ENCODE measurements at regions of chr2 and their contacts with region 1.

Region 1: DNA sequence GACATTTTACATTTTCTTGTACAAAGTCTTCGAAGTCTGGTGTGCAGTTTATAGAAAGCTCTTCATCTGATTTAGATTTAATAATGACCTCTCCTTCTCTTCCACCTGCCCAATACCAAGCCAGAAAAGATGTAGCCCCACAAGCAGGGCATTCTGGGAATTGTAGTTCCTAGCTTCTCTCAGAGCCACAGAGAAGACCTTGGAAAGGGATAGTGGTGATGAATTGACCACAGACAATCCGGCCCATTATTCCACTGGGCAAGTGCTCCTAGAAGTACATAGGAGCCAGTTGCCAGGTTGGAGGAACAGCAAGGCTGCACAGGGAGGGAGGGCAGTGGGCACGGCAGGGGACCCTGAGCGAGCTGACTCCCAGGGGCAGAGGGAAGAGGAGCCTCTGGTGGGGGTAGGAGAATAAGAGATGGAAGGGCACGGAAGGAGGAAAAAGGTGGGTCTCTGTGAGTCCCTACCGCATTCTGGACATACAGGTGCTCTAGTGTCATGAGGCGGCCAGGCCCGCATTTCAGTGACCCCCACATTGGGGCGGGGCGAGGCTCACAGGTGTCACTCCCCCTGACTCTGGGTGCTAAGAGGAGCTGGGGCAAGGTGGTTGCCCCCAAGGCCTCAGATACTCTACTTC is 152.5 kb upstream of the HAAO start:
- DNase-seq: peak; percentile 44 to 60
- ATAC-seq: peak; percentile 48 to 79; a peak in 4 of 6 replicates
- H3K4me3 ChIP-seq: no peak overlapping the region
- H3K27ac ChIP-seq: no peak overlapping the region
- H3K4me1 ChIP-seq: no peaks in the 10 kb centered on the region
- CTCF ChIP-seq: no peak
- EP300 ChIP-seq: no peak
- POLR2A ChIP-seq: no peak
- RAD21 ChIP-seq: no peak

Region 2: DNA sequence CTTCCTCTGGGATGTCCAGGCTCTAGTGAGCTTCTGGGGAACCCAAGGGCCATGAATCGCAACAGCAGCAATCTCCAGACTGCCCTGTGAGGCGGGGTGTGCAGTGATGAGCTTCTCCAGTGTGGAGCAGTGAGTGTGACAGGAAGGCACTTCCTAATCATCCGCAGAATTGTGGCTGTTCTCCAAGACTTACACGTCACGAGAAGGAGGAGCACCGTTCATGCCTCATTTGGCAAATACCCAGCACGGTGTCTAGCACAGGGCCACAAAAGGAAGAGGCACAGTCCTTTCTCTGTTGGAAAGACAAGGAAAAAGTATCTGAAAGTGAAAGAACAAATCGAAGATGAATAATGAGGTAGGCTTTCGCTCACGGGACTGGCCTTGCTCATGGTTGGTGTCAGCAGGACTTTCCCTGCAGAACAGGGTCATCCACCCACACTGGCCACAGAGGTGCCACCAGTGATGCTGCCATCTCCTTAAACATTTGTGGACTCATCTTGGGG is 27.4 kb before region 1 on chr2:
- CTCF ChIA-PET with region 1: interaction called, 10 read pairs
- POLR2A ChIA-PET with region 1: no interaction called
- DNase-seq: no peak
- ATAC-seq: peak in 1 of 2 experiments; percentile 40; a peak in 2 of 6 replicates
- H3K4me3 ChIP-seq: no peak overlapping the region
- H3K27ac ChIP-seq: no peak overlapping the region
- H3K4me1 ChIP-seq: no peaks in the 10 kb centered on the region; the same call in 2 of the 3 replicates
- CTCF ChIP-seq: no peak
- EP300 ChIP-seq: no peak
- POLR2A ChIP-seq: no peak
- RAD21 ChIP-seq: no peak

Region 3: DNA sequence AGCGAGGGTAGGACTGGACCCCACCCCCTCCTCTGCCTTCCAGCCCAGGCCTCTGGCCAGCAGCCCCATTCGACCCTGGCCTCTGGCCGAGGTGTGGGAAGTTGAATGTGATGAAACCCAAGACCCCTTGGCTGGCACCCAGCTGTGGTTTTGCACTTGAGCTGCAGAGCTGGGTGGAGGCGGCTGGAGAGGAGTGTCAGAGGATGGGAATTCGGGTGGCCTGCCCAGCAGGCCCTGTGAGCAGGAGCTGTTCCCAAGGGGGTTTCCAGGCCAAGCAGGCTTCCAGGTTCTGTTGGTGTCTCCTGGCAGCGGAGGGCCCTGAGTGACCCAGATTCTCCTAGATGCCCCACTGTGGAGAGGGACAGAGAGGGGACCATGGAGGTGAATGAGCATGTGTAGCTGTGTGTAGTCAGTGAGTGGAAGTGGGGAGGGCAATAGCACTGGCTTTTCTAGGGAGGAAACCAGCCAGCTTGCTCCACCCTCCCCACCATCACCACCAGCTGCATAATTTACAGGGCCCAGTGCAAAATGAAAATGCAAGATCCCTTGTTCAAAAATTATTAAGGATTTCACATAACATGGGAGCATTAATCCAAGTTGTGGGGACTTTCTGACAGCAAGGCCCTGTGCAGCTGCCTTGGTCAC is 19.7 kb after region 1 on chr2:
- CTCF ChIA-PET with region 1: interaction called, 71 read pairs
- POLR2A ChIA-PET with region 1: no interaction called
- DNase-seq: no peak
- ATAC-seq: no peak
- H3K4me3 ChIP-seq: no peak overlapping the region
- H3K27ac ChIP-seq: no peak overlapping the region
- H3K4me1 ChIP-seq: peaks cover 3% of the 10 kb centered on the region; the same call in 2 of the 3 replicates
- CTCF ChIP-seq: no peak
- EP300 ChIP-seq: no peak
- POLR2A ChIP-seq: no peak
- RAD21 ChIP-seq: no peak

Region 4: DNA sequence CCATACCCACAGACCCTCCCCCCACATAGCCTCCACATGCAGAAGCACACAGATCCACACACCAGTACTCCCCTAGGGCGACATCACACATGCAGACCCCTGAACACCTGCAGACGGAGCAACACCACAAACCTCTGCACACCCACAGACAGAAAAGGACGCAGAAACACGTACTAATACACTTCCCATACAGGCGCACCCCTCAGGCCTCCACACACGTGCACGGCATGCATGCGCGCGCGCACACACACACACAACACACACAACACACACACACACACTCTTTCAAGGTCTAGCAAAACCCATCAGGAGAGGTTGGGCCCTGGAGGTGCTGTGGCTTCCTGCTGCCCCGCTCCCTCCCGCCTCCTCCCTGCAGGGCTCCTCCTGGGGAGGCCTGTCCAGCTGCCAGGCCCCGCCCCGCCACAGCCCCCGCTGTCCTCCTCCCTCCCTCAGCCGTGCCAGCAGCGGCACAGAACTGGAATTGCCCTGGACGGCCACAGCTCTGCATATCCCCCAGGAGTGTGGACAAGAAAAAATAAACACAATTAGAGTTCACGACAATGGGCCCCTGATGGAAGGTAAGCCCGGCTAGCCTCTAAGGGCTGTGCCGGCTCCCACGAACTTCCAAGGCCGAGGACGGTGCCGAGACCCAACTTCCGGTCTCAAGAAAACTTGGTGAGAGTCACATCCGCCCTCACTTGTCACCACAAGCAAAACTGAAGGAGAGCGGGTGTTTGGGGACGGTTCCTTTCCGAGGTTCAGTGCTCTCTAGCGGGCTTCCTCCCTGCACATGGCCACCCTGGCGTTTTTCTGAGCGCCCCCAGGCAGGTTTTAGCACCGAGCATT is 274.7 kb after region 1 on chr2:
- CTCF ChIA-PET with region 1: interaction called, 22 read pairs
- POLR2A ChIA-PET with region 1: no interaction called
- DNase-seq: peak; percentile 81 to 93
- ATAC-seq: peak; percentile 71 to 84
- H3K4me3 ChIP-seq: peak overlapping the region; percentile 44
- H3K27ac ChIP-seq: peak overlapping the region; percentile 89 to 95
- H3K4me1 ChIP-seq: peaks cover 52% of the 10 kb centered on the region
- CTCF ChIP-seq: no peak
- EP300 ChIP-seq: no peak
- POLR2A ChIP-seq: peak; percentile 48
- RAD21 ChIP-seq: peak; percentile 16 to 40; a peak in 3 of 5 replicates

Region 5: GRCh38 chr2:43542285-43542937 is 597.5 kb after region 1 on chr2:
- CTCF ChIA-PET with region 1: interaction called, 46 read pairs
- POLR2A ChIA-PET with region 1: no interaction called
- DNase-seq: peak; percentile 28 to 55
- ATAC-seq: peak; percentile 56 to 71; a peak in 3 of 6 replicates
- H3K4me3 ChIP-seq: no peak overlapping the region
- H3K27ac ChIP-seq: peak overlapping the region in 1 of 2 experiments; percentile 63; a peak in 1 of 6 replicates
- H3K4me1 ChIP-seq: peaks cover 29% of the 10 kb centered on the region
- CTCF ChIP-seq: peak; percentile 81
- EP300 ChIP-seq: no peak
- POLR2A ChIP-seq: no peak
- RAD21 ChIP-seq: peak; percentile 77 to 86

Region 6: DNA sequence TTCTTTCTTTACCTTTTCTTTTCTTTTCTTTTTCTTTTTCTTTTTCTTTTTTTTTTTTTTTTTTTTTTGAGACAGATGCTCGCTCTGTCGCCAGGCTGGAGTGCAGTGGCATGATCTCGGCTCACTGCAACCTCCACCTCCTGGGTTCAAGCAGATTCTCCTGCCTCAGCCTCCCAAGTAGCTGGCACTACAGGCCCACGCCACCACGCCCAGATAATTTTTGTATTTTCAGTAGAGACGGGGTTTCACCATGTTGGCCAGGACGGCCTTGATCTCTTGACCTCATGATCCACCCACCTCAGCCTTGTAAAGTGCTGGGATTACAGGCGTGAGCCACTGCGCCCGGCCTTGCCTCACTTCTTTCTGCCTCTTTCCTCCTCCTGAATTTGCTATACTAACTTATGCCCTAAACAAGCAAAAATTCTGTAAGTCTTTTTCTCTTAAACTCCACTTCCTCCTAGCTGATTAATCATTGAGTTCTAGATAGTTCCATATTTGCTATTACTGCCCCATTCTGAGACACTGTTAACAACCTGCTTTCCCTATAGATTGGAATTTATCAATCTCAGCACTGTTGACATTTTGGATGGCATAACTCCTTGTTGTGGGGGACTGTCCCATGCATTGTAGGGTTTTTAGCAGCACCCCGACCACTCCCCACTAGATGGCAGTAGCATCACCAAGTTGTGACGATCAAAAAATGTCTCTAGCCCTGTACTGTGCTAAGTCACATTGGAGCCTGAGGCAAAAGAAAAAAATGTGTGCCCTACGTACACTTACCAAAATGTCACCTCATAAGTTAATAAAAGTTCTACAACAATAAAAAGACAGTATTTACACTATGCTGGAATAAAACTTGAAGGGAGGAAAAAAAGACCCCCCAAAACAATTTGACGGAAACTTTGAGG is 667.3 kb after region 1 on chr2:
- CTCF ChIA-PET with region 1: interaction called, 15 read pairs
- POLR2A ChIA-PET with region 1: no interaction called
- DNase-seq: peak; percentile 58 to 82
- ATAC-seq: peak; percentile 89 to 94
- H3K4me3 ChIP-seq: no peak overlapping the region
- H3K27ac ChIP-seq: peak overlapping the region; percentile 45 to 55; a peak in 5 of 6 replicates
- H3K4me1 ChIP-seq: peaks cover 6% of the 10 kb centered on the region; the same call in 1 of the 3 replicates
- CTCF ChIP-seq: peak; percentile 95
- EP300 ChIP-seq: no peak
- POLR2A ChIP-seq: no peak
- RAD21 ChIP-seq: peak; percentile 89 to 91

Measured in A549 (cell line).